Psoas muscle (tissue), 8 donors: ENCODE measurements at regions of chr3 and their contacts with region 1.

Region 1: GRCh38 chr3:61858056-61858455 is 296.7 kb downstream of the PTPRG start:
- DNase-seq: no peak
- ATAC-seq: peak in 3 of 4 donors; percentile 58 to 78 (median 76)
- H3K4me3 ChIP-seq: no peak overlapping the region
- H3K27ac ChIP-seq: no peak overlapping the region
- H3K4me1 ChIP-seq: peaks cover 30% of the 10 kb centered on the region
- H3K27me3 ChIP-seq: no peaks in the 10 kb centered on the region
- CTCF ChIP-seq: peak; percentile 68

Region 2: DNA sequence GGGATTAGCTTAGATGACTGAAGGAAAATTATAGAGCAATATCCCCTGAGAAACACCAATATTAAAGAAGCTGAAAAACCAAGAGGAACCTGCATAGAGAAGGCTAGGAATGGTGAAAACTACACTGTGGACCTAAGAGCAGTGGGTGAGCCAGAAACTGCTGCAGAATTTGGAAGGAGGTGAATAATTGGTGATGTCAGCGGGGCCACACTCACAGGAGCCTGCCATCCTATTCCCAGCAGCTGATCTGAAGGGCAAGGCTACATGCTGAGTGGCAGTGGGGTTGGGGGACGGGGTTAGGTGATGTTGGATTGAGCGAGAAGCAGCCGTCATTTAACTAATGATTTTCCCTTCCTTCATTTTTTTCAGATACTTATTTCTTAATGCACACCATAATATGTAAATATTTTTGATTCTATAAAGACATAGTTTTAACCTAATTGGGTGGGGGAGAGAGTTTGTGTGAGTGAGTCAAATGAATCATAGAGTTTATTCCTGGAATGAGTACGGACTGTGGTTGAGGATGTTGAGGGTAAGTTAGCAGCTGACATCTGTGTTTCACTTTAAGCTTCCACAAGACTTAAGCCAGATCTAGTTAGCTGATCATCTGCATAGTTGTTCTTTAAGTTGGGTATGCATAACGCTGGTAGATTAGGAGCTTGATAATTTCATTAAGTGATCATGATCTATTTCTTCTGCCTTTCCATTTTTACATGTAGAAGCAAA is 73.9 kb before region 1 on chr3:
- intact Hi-C with region 1: no loop called
- DNase-seq: no peak
- ATAC-seq: peak in 2 of 4 donors; percentile 39 to 47
- H3K4me3 ChIP-seq: no peak overlapping the region
- H3K27ac ChIP-seq: no peak overlapping the region
- H3K4me1 ChIP-seq: peaks cover 3% of the 10 kb centered on the region
- H3K27me3 ChIP-seq: no peaks in the 10 kb centered on the region
- CTCF ChIP-seq: no peak

Region 3: DNA sequence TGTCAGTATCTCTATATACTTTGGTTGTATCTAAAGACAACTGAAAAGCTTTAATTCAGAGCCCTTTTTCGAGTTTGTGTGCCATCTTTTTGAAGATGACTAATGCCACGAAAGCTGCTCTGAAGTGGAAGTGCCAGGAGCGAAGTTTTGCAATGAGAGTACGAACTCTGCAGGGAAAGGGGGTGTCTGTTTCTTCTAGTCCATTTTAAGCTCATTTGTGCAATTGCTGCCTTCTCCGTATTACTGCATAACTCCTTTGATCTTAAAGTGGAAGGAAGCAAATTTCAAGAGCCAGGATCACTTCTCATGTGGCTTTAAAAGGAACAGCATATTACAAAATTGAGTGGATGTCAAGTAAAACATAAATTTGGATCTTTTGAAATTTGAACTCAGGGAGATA is 270.0 kb after region 1 on chr3:
- intact Hi-C with region 1: loop called in 1 of 2 experiments (anchors 5 kb)
- DNase-seq: peak in 1 of 2 donors; percentile 41
- ATAC-seq: peak; percentile 58 to 95 (median 86)
- H3K4me3 ChIP-seq: no peak overlapping the region
- H3K27ac ChIP-seq: peak overlapping the region; percentile 47
- H3K4me1 ChIP-seq: peaks cover 19% of the 10 kb centered on the region
- H3K27me3 ChIP-seq: no peaks in the 10 kb centered on the region
- CTCF ChIP-seq: no peak

Region 4: DNA sequence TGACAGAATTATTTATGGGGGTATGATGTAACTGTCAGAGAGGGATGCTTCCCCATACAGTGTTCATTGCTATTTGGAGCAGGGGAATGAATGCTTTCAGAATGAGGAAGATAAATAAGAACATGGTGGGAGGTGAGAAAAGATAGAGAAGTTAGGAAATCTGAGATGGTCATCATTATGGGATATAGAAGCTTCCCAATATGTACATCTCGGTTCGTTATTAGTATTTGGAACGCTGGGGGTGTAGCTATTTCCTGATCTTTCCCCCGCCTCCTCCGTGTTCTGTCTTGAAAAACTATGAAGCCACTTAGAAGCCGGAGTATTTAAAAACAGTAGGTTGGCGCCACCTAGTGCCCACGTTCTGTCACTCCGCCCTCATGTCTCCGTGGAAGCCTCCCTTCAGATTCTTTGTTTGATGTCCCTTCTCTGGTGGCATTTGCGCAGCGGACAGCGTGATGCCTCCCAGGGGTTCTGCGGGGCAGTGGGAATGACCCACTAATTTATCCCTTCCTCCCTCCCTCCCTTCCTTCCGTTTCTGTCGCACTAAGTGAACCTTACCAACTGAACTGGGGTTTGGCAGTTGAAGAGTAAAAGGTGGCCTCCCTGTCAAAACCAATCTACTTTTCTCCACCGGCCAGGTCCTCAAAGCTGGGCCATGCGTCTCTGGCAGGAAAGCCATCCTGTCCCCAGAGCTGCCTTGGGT is 330.8 kb after region 1 on chr3:
- intact Hi-C with region 1: loop called (anchors 2 to 5 kb)
- DNase-seq: peak; percentile 70 to 88
- ATAC-seq: peak; percentile 79 to 93 (median 82)
- H3K4me3 ChIP-seq: peak overlapping the region; percentile 52
- H3K27ac ChIP-seq: no peak overlapping the region
- H3K4me1 ChIP-seq: peaks cover 15% of the 10 kb centered on the region
- H3K27me3 ChIP-seq: no peaks in the 10 kb centered on the region
- CTCF ChIP-seq: peak; percentile 92